CD4-positive, alpha-beta memory T cell (primary cell): ENCODE measurements at regions of chr6 and their contacts with region 1.

Region 1: DNA sequence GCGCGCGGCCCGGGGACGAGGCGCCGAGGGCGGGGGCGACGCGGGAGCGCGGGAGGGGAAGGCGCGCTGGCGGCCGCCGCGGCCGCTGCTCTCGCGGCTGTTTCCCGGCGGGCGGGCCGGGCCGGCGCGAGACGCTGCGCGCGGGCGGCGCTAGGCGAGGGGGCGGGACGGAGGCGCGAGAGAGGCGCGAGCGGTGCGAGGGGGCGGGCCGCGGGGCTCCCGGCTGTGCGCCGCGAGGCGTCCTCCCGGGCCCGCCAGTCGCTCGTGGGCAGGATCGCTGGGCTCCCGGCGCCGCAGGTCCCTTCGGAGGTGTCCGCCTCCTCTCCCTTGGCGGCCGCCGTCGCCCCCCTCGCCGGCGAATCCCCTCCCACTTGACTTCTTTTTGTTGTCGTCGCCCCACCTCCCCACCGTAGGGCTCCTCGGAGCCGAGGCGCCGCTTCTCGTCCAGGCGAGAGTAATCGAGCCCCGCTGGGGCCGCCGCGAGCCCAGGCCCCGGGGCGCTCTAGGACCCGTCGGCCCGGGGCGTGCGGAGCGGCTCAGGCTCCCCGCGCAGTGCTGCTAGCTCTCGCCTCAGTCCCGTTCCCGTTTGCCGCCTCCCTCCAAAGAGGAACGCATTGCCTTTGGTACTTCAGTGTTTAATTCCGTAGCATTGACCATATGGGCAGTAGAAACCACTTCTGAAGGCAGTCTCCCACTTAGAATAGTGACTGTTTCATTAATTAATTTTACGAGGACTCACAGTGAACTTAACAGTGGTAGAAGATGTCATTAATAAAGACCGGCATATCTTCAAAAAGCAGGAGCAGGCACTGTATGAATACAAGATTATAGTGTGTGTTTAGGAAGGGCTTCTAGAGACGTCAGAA is at the start of gene RANBP9:
- DNase-seq: peak; percentile 89 to 92 (median 91)
- H3K4me3 ChIP-seq: peak within 1 kb of the TSS; percentile 69 to 74
- H3K4me3 Mint-ChIP-seq: peak within 1 kb of the TSS; percentile 95 to 99 (median 96)
- H3K27ac ChIP-seq: peak within 1 kb of the TSS; percentile 87
- H3K27ac Mint-ChIP-seq: peak within 1 kb of the TSS; percentile 98 to 99 (median 99)
- H3K4me1 ChIP-seq: peaks cover 50% of the 10 kb centered on the region
- H3K4me1 Mint-ChIP-seq: peaks cover 28 to 73% (median 44%) of the 10 kb centered on the region in 4 donors
- H3K27me3 ChIP-seq: no peaks in the 10 kb centered on the region
- H3K27me3 Mint-ChIP-seq: no peaks in the 10 kb centered on the region
- total RNA-seq, gene RANBP9: 51.1 to 52.9 TPM

Region 2: DNA sequence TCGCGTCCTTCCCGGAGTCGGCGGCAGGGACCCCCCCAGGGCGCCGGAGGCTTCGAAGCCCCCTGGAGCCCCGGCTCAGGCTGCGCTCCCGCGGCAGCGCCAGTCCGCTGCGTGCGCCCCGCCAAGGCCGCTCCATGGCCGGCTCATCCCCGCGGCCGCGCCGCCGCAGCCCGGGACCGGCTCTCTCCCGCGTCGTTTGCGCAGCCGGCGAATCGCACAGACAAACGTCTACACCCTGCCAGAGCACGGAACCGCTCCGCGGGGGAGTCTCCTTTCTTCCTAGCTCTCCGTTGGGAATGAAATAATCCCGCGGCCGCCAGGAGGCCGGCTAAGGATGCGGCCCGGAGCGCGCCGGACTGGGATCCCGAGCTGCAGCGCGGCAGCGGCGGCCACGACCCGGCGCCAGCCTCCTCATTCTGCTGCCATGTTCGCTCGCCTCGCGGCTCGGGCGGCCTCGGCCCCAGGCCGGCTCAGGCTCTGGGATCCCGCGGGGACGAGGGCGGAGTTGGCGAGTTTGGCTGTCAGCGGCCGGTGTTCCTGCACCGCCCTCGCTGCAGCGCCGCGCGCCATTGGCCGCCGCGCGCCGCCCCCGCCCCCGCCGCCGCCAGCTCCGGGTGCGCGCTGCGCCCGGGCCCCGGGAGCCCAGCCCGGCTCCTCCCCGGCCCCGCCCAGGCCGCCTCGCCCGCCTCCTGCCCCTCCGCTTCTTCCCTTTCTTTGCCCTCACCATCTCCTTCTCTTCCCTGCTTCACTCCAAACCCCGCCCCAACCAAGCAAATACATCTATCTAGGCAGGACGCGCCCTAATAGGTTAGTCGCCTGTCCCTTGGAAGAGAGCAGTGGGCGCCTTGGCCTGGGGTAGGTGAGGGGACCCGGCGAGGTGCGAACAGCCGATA is 224.6 kb before region 1 on chr6 and contains the start of gene GFOD1:
- CTCF ChIA-PET with region 1: no interaction called
- POLR2A ChIA-PET with region 1: interaction called, 3 read pairs
- intact Hi-C with region 1: loop called (anchors 5 kb)
- DNase-seq: peak; percentile 55 to 68 (median 61)
- H3K4me3 ChIP-seq: peak within 1 kb of the TSS; percentile 67 to 69
- H3K4me3 Mint-ChIP-seq: peak within 1 kb of the TSS; percentile 88 to 94 (median 92)
- H3K27ac ChIP-seq: peak within 1 kb of the TSS; percentile 4
- H3K27ac Mint-ChIP-seq: peak within 1 kb of the TSS; percentile 42 to 78 (median 73)
- H3K4me1 ChIP-seq: peaks cover 12% of the 10 kb centered on the region
- H3K4me1 Mint-ChIP-seq: peaks cover 16 to 36% (median 30%) of the 10 kb centered on the region in 4 donors
- H3K27me3 ChIP-seq: no peaks in the 10 kb centered on the region
- H3K27me3 Mint-ChIP-seq: peaks cover 5 to 6% of the 10 kb centered on the region in 2 donors
- total RNA-seq, gene GFOD1: 0.97 to 1.1 TPM

Region 3: DNA sequence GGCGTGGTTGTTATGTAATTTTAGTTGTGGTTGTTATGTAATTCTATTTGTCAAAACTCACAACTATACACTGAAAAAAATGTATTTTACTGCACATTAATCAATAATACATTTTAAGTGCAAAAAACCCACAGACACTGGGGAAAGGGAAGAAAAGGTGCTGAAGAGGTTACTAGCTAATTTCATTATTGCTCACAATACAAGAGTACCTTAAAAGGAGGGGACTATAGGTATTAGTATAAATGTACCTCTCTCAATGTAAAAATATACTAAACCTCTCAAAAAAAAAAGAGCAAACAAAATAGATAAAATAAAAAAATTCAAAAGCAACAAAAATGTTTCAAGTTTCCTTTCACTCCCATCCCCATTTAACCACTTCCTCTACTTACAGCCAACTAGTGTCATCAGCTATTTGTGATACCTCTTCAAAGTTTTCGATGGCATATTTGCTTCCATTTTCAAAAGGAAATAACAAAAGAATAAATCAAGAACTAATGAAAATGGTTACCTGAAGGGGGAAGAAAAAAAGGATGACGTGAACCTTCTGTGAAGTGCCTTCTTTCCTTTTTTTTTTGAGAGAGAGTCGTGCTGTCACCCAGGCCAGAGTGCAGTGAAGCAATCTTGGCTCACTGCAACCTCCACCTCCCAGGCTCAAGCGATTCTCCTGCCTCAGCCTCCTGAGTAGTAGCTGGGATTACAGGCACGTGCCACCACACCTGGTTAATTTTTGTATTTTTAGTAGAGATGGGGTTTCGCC is 30.5 kb before region 1 on chr6:
- CTCF ChIA-PET with region 1: interaction called, 17 read pairs
- POLR2A ChIA-PET with region 1: interaction called, 63 read pairs
- intact Hi-C with region 1: loop called (anchors 2 kb)
- DNase-seq: peak; percentile 46 to 82 (median 71)
- H3K4me3 ChIP-seq: peak overlapping the region in 1 of 2 donors; percentile 22
- H3K4me3 Mint-ChIP-seq: peak overlapping the region; percentile 63 to 88 (median 78)
- H3K27ac ChIP-seq: peak overlapping the region; percentile 44
- H3K27ac Mint-ChIP-seq: peak overlapping the region; percentile 85 to 96 (median 92)
- H3K4me1 ChIP-seq: peaks cover 77% of the 10 kb centered on the region
- H3K4me1 Mint-ChIP-seq: peaks cover 34 to 66% (median 50%) of the 10 kb centered on the region in 4 donors
- H3K27me3 ChIP-seq: no peaks in the 10 kb centered on the region
- H3K27me3 Mint-ChIP-seq: no peaks in the 10 kb centered on the region

Region 4: DNA sequence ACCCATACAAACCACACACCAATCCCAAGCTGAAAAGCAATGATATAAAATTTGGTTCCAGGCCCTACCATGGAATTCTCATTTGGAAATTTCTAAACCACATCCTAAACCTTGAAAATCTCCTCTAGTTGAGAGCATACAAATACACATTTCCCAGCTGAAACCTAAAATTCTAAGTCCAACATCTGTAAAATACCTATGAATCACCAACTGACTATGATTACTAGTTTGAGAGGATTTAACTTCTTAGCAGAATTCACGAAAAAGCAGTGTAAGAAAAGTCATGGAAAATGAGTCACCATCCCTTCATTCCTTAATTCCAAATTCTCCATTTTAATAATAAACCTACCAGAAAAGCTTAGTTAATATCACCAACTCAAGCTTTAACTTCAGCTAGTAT is 15.7 kb before region 1 on chr6:
- CTCF ChIA-PET with region 1: interaction called, 9 read pairs
- POLR2A ChIA-PET with region 1: interaction called, 79 read pairs
- intact Hi-C with region 1: loop called (anchors 2 kb)
- DNase-seq: no peak
- H3K4me3 ChIP-seq: no peak overlapping the region
- H3K4me3 Mint-ChIP-seq: peak overlapping the region in 4 of 8 donors; percentile 15 to 67 (median 38)
- H3K27ac ChIP-seq: peak overlapping the region; percentile 42
- H3K27ac Mint-ChIP-seq: peak overlapping the region; percentile 39 to 94 (median 86)
- H3K4me1 ChIP-seq: peaks cover 86% of the 10 kb centered on the region
- H3K4me1 Mint-ChIP-seq: peaks cover 53 to 78% (median 64%) of the 10 kb centered on the region in 4 donors
- H3K27me3 ChIP-seq: no peaks in the 10 kb centered on the region
- H3K27me3 Mint-ChIP-seq: no peaks in the 10 kb centered on the region

Region 5: GRCh38 chr6:13742961-13743735 is 31.2 kb after region 1 on chr6:
- CTCF ChIA-PET with region 1: no interaction called
- POLR2A ChIA-PET with region 1: interaction called, 23 read pairs
- intact Hi-C with region 1: loop called (anchors 1 kb)
- DNase-seq: no peak
- H3K4me3 ChIP-seq: no peak overlapping the region
- H3K4me3 Mint-ChIP-seq: peak overlapping the region in 3 of 8 donors; percentile 16 to 54 (median 46)
- H3K27ac ChIP-seq: no peak overlapping the region
- H3K27ac Mint-ChIP-seq: peak overlapping the region in 1 of 7 donors; percentile 64
- H3K4me1 ChIP-seq: peaks cover 8% of the 10 kb centered on the region
- H3K4me1 Mint-ChIP-seq: peaks cover 3 to 12% (median 7%) of the 10 kb centered on the region in 4 donors
- H3K27me3 ChIP-seq: no peaks in the 10 kb centered on the region
- H3K27me3 Mint-ChIP-seq: no peaks in the 10 kb centered on the region

Region 6: DNA sequence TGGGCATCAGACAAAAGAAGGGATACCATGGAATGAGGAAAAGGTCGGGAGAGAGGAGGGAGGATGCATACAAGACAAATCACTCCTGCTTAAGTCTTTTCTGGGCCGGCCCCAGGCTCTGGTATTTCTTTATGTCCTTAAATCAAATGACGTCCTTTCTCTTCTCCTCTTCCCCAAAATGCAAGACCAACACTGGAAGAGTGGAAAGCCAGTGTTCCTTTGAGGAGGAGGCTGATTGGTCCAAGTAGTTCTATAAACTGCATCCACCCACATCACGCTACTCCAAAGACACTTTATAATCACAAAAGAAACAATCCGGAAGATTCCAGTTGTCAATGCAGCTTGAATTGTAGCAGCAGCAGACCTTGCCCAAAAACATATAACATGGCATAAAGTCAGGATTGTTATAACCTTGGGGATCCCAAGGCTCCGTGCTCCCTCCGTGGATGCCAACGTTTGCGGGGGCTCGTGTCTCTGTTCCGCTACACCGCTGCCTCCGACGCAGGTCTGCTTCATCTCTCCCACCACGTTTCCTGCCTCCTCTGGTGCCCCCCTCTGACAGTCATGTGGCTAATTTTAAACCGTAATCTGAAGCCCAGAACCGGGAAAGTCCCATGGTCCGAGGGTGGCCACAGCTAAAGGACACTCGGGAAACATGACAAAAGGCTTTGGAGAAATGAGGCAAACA is 55.3 kb after region 1 on chr6:
- CTCF ChIA-PET with region 1: no interaction called
- POLR2A ChIA-PET with region 1: interaction called, 35 read pairs
- intact Hi-C with region 1: loop called (anchors 2 kb)
- DNase-seq: peak in 4 of 5 donors; percentile 11 to 25 (median 22)
- H3K4me3 ChIP-seq: peak overlapping the region in 1 of 2 donors; percentile 32
- H3K4me3 Mint-ChIP-seq: peak overlapping the region in 7 of 8 donors; percentile 65 to 80 (median 74)
- H3K27ac ChIP-seq: no peak overlapping the region
- H3K27ac Mint-ChIP-seq: peak overlapping the region in 5 of 7 donors; percentile 43 to 89 (median 61)
- H3K4me1 ChIP-seq: peaks cover 19% of the 10 kb centered on the region
- H3K4me1 Mint-ChIP-seq: peaks cover 23 to 44% (median 31%) of the 10 kb centered on the region in 4 donors
- H3K27me3 ChIP-seq: no peaks in the 10 kb centered on the region
- H3K27me3 Mint-ChIP-seq: no peaks in the 10 kb centered on the region

Region 7: GRCh38 chr6:13814176-13814937 is 102.4 kb after region 1 on chr6 and contains the start of gene MCUR1:
- CTCF ChIA-PET with region 1: no interaction called
- POLR2A ChIA-PET with region 1: interaction called, 21 read pairs
- intact Hi-C with region 1: loop called (anchors 1 kb)
- DNase-seq: peak; percentile 77 to 83 (median 81)
- H3K4me3 ChIP-seq: peak within 1 kb of the TSS; percentile 34 to 78
- H3K4me3 Mint-ChIP-seq: peak within 1 kb of the TSS; percentile 88 to 93 (median 90)
- H3K27ac ChIP-seq: peak within 1 kb of the TSS; percentile 62
- H3K27ac Mint-ChIP-seq: peak within 1 kb of the TSS; percentile 82 to 92 (median 89)
- H3K4me1 ChIP-seq: peaks cover 28% of the 10 kb centered on the region
- H3K4me1 Mint-ChIP-seq: peaks cover 24 to 33% (median 31%) of the 10 kb centered on the region in 4 donors
- H3K27me3 ChIP-seq: no peaks in the 10 kb centered on the region
- H3K27me3 Mint-ChIP-seq: no peaks in the 10 kb centered on the region
- total RNA-seq, gene MCUR1: 11.3 to 11.5 TPM